Lower lobe of right lung (tissue), 2 donors: ENCODE measurements at regions of chr17 and their contacts with region 1.

Region 1: DNA sequence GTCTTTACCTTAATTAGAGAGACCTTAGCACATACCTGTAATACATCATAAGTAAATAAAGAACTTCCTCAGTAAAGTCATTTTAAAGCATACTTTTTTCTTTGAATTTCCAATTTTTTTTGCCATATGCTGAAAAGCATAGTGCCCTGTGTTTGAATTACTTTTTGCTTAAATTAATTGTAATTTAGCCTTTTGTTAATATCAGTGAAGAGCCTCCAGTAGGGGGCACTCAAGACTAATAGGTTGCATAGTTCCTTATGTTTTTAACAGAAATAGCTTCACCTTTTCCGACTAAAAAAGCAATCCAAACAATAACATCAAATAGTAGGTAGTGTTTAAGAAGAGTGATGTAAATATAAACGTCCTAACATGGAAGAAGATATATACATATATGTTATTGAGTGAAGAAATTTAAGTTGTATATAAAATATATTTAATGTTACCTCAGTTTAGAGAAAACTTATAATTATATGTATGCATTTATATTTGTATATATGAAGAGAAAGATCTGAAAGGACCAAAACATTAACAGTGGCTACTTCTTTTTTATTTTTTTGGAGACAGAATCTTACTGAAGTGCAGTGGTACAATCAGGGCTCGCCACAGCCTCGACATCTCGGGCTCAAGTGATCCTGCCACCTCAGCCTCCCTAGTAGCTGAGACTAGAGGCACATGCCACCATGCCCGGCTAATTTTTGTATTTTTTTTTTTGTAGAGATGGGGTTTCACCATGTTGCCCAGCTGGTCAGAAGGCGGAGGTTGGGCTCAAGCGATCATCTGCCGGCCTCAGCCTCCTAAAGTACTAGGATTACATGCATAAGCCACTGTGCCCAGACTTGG is 18.8 kb downstream of the RAD51C start:
- DNase-seq: no peak
- ATAC-seq: no peak
- H3K4me3 ChIP-seq: no peak overlapping the region
- H3K27ac ChIP-seq: no peak overlapping the region
- H3K4me1 ChIP-seq: no peaks in the 10 kb centered on the region
- H3K27me3 ChIP-seq: no peaks in the 10 kb centered on the region
- CTCF ChIP-seq: peak; percentile 77

Region 2: DNA sequence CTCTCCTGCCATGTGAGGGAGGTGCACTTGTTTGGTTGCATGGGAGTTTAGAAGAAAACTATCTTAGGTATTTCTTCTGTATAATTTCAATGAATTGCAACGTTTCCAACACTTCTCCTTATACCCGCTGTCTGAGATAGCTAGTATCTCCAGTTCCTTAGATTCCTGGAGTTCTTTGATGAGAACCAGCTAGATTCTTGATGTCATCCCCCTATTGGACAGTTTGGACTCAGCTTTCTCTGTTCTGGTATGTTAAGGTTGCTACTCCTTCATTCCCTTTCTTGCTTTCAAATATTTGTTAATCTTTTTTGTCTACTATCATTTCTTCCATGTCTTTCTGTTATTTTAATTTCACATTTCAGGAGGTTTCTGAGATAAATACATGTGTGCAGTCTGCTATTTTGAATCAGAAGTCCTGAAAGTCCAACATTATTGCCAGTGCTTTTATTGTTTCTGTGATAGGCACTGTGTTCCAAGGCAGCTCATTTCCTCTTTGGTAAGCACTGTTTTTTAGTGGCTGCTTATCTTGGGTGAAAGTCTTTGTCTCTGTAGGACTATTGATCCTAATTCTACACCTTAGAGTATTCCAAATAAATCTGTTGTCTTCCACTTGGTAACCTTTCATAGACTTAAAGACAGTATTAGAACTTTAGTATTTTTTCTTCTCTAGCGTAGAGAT is 120.5 kb after region 1 on chr17:
- intact Hi-C with region 1: no loop called
- DNase-seq: no peak
- ATAC-seq: no peak
- H3K4me3 ChIP-seq: no peak overlapping the region
- H3K27ac ChIP-seq: no peak overlapping the region
- H3K4me1 ChIP-seq: no peaks in the 10 kb centered on the region
- H3K27me3 ChIP-seq: no peaks in the 10 kb centered on the region
- CTCF ChIP-seq: no peak

Region 3: DNA sequence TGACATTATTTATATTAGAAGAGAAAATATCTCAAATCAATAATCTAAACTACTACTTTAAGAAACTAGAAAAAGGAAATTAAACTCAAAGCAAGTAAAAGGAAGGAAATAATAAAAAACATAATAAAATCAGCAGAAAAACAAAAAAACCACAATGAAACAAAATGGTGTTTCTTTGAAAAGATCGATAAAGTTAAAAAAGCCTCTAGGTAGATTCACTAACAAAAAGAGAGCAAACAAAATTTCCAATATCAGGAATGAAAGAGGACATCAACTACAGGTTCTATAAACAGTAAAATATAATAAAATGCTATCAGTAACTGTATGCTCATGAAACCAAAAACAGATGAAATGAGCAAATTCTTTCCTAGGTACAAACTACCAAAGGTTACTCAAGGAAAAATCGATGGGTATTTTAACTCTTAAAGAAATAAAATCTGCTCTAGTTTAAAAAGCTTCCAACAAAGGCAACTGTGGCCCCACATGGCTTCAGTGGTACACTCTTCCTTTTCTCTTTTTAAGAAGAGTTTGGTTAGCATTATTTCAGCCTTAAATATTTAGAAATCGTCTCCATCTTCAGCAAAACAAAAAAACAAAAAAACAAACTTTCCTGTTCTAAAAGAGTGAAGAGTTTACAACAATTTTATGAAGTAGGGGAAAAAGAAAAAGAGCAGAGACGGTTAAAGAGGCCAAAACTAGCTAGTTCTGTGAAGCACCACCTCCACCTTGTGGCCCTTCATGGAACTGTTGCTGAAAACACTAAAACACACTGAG is 293.4 kb after region 1 on chr17:
- intact Hi-C with region 1: loop called (anchors 10 kb)
- DNase-seq: no peak
- ATAC-seq: peak; percentile 82 to 83
- H3K4me3 ChIP-seq: no peak overlapping the region
- H3K27ac ChIP-seq: no peak overlapping the region
- H3K4me1 ChIP-seq: peaks cover 11% of the 10 kb centered on the region
- H3K27me3 ChIP-seq: no peaks in the 10 kb centered on the region
- CTCF ChIP-seq: peak; percentile 97